Motor neuron (in vitro differentiated cells): ENCODE measurements at regions of chr1 and their contacts with region 1.

Region 1: GRCh38 chr1:46862348-46862747 is 63.5 kb downstream of the CYP4B1 start:
- ATAC-seq: no peak
- H3K4me3 ChIP-seq: no peak overlapping the region
- H3K27ac ChIP-seq: no peak overlapping the region
- H3K4me1 ChIP-seq: no peaks in the 10 kb centered on the region

Region 2: DNA sequence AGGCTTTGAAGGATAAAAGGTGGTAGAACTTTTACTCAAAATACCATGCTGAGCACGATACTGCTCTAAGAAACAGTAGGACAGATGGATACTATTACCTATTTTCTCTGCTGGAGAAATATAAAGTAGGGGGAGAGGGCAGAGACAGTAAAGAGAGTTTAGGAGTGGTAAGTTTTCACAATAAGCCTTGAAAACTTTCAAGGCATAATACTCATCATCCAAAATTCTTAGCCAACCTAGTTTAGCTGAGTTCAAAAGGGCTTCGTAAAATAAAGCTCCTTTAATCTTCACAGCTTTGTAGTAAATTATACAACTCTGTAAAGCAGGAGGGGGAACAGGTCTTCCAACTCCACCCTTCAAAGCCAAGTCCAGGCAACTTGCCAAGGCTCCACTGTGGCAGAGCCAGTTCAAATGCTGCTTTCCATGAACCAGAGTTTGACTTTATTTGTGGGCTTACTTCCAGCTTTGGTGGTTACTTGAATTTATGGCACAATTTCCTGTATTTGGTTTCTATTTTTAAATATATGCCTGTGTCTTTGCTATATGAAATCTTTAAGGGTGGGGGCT is 175.2 kb before region 1 on chr1:
- in situ Hi-C with region 1: no loop called
- ATAC-seq: peak in 3 of 8 experiments; percentile 35 to 75 (median 66)
- H3K4me3 ChIP-seq: no peak overlapping the region
- H3K27ac ChIP-seq: no peak overlapping the region
- H3K4me1 ChIP-seq: peaks cover 11 to 12% of the 10 kb centered on the region in 2 donors

Region 3: GRCh38 chr1:46724991-46725735 is 137.2 kb before region 1 on chr1:
- in situ Hi-C with region 1: loop called in 1 of 9 experiments (anchors 25 kb)
- ATAC-seq: peak; percentile 83 to 100 (median 99)
- H3K4me3 ChIP-seq: no peak overlapping the region
- H3K27ac ChIP-seq: no peak overlapping the region
- H3K4me1 ChIP-seq: peaks cover 4 to 6% of the 10 kb centered on the region in 2 donors